PC-9 (cell line): ENCODE measurements at regions of chr2 and their contacts with region 1.

Region 1: GRCh38 chr2:121736462-121737341 is at the start of gene NIFK:
- DNase-seq: peak; percentile 94 to 100
- H3K4me3 ChIP-seq: peak within 1 kb of the TSS; percentile 82
- H3K27ac ChIP-seq: peak within 1 kb of the TSS; percentile 44
- H3K4me1 ChIP-seq: peaks cover 10% of the 10 kb centered on the region
- H3K27me3 ChIP-seq: no peaks in the 10 kb centered on the region
- CTCF ChIP-seq: no peak
- total RNA-seq, gene NIFK: 48.1 and 75.9 TPM in 2 replicates

Region 2: DNA sequence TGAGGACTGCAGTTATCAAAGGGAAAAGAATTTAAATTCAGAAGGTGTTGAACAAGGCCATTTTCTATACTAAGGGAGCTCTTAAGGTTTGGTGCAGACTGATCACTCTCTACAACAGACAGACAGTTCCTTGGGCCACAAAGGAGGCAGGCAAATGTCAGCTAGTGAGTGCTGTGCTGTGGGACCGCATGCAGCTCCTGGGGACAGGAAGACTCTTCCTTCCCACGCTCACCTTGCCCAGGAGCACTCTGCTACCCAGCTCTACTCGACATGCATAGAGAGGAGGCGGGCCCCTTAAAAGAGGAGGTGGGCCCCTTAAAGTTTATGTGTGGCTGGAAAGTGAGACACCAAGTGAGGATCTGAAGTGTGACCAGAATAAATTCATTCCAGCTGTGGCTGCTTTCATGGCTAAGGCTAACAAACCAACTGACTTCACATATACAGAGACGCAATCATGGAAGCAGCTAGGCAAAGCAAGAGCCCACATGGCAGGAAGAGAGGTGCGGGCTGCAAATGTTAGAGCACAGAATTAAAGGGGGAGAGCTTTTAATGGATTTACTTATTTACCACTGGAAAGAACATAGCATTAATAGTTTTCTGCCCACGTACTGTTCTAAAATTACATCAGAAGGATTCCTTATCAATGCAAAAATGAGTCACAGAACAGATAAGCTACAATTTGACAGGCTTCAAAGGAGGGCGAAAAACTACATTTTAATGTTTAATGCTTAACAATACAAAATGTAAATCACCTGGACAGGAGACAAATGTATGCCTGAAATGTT is 307.4 kb before region 1 on chr2:
- CTCF ChIA-PET with region 1: no interaction called
- POLR2A ChIA-PET with region 1: interaction called, 10 read pairs
- intact Hi-C with region 1: no loop called
- DNase-seq: no peak
- H3K4me3 ChIP-seq: no peak overlapping the region
- H3K27ac ChIP-seq: no peak overlapping the region
- H3K4me1 ChIP-seq: no peaks in the 10 kb centered on the region
- H3K27me3 ChIP-seq: no peaks in the 10 kb centered on the region
- CTCF ChIP-seq: no peak

Region 3: DNA sequence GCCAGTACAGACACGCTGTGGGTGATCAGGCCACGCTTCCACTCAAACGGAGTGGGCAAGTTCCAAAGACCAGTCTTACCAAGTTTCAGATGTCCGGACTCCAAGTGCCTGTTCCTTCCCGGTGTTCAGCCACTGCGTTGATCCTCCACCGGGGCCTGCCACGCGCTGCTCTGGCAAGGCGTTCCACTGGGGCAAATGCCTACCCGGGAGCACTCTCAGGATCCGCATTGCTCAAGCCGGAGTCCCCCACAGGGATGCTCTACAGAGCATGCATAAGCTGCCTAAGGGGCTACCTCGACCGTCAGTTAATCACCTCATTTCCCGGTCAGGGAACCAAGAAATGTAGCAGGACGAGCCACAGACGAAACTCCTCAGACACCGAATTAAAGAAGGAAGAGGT is 50.5 kb before region 1 on chr2:
- CTCF ChIA-PET with region 1: no interaction called
- POLR2A ChIA-PET with region 1: no interaction called
- intact Hi-C with region 1: no loop called
- DNase-seq: no peak
- H3K4me3 ChIP-seq: no peak overlapping the region
- H3K27ac ChIP-seq: no peak overlapping the region
- H3K4me1 ChIP-seq: no peaks in the 10 kb centered on the region
- H3K27me3 ChIP-seq: no peaks in the 10 kb centered on the region
- CTCF ChIP-seq: no peak

Region 4: GRCh38 chr2:121707920-121708361 is 28.8 kb before region 1 on chr2:
- CTCF ChIA-PET with region 1: no interaction called
- POLR2A ChIA-PET with region 1: interaction called, 21 read pairs
- intact Hi-C with region 1: no loop called
- DNase-seq: peak; percentile 51 to 76
- H3K4me3 ChIP-seq: no peak overlapping the region
- H3K27ac ChIP-seq: peak overlapping the region; percentile 46
- H3K4me1 ChIP-seq: peaks cover 8% of the 10 kb centered on the region
- H3K27me3 ChIP-seq: no peaks in the 10 kb centered on the region
- CTCF ChIP-seq: no peak

Region 5: GRCh38 chr2:122078451-122078850 is 341.7 kb after region 1 on chr2:
- CTCF ChIA-PET with region 1: no interaction called
- POLR2A ChIA-PET with region 1: interaction called, 19 read pairs
- intact Hi-C with region 1: no loop called
- DNase-seq: no peak
- H3K4me3 ChIP-seq: no peak overlapping the region
- H3K27ac ChIP-seq: no peak overlapping the region
- H3K4me1 ChIP-seq: no peaks in the 10 kb centered on the region
- H3K27me3 ChIP-seq: peaks cover 61% of the 10 kb centered on the region
- CTCF ChIP-seq: no peak

Region 6: DNA sequence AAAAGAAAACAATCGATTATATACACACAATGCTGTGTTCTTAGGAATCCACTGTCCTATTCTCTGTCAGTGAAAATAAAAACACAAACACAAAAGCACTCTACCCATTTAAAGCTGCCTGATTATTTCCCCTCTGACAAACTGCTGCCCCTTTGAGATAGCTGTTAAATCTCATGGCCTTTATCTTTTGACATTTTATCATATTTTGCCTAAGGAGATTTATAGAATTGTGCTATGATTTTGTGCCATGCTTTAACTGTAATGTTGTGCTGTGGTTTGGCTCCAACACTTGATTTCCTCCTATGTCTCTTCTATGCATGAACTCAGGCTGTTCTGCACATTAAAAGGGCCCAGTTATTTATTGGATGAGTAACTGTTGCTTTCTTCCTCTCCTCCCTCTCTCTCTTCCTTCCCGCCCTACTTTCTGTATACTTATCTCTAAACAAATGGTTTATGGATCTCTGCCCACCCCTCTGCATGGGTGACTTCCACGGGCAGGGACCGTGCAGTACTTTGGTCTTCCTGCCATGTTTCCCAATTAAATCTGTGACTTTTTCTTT is 1115.3 kb after region 1 on chr2:
- CTCF ChIA-PET with region 1: no interaction called
- POLR2A ChIA-PET with region 1: interaction called, 12 read pairs
- intact Hi-C with region 1: no loop called
- DNase-seq: no peak
- H3K4me3 ChIP-seq: no peak overlapping the region
- H3K27ac ChIP-seq: no peak overlapping the region
- H3K4me1 ChIP-seq: no peaks in the 10 kb centered on the region
- H3K27me3 ChIP-seq: no peaks in the 10 kb centered on the region
- CTCF ChIP-seq: no peak